Sigmoid colon (tissue), 7 donors: ENCODE measurements at regions of chr19 and their contacts with region 1.

Region 1: DNA sequence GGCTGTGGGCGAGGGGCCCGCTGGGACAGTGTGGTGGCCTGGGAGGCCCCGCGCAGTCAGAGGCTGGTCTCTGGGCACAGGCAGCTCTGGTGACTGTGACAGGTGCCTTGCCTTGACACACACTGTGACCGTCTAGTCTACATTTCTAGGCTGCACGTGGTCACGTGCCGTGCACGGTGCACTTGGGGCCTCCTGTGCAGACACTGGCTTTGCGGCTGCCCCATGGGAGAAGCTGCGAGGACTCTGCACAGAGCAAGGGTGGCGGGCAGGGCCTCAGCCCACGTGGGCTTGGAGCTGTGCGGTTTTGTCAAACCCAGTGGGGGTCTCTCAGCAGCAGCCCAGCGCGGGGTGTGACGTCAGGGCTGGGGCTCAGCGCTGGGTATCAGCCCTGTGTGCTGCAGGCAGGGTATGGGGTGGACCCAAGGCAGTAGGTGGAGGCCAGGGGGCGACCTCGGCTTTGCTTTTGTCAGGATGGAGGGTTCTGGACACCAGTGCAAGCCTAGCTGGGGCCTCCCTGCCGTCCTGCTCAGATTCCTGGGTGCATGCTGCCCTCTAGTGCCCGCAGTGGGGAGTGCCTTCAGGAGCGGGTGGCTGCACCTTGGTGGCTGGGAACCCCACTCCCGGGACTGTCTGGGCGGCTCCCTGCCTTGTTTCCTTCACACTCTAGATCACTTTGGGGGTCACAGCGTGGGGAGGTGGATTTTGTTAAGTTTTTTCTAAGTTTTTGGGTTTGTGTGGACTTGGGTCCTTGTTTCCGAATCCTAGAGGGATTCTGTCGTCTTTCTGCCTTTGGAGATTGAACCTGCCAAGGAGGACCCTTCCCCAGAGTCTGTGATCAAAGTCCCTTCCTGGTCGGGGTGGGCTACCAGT is 62.6 kb downstream of the KDM4B start:
- DNase-seq: peak; percentile 91
- H3K4me3 ChIP-seq: no peak overlapping the region
- H3K27ac ChIP-seq: peak overlapping the region in 1 of 4 donors; percentile 2
- H3K4me1 ChIP-seq: peaks cover 0 to 63% (median 51%) of the 10 kb centered on the region in 4 donors
- H3K27me3 ChIP-seq: no peaks in the 10 kb centered on the region
- CTCF ChIP-seq: peak; percentile 89 to 95 (median 93)
- EP300 ChIP-seq: no peak
- POLR2A ChIP-seq: no peak

Region 2: DNA sequence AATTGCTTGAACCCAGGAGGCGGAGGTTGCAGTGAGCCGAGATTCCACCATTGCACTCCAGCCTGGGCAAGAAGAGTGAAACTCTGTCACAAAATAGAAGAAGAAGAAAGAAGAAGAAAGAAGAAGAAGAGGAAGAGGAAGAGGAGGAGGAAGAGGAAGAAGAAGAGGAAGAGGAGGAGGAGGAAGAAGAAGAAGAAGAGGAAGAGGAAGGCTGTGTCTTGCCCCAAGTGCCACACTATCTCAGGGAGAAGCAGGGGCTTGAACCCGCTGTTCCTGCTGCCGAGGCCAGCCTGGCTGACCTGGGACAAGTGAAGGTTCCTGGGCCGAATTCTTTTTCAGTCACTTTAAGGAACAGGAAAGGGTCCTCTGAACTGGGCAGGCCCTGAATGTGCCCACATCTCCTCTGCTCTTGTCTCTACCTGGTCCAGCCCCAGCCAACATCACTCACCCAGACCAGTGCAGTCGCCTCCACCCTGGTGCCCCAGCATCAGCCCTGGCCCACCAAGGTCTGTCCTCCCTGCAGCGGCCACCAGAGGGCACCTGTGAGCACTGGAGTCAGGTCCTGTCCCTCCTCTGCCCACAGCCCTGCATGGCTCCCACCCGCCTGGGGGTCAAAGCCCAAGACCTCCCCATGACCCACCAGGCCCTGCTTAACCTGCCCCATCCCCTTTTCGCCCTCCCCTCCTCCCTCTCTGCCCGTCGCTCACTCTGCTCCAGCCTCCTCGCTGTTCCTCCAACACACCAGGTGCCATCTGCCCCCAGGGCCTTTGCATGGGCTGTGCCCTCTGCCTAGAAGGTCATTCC is 219.9 kb before region 1 on chr19:
- intact Hi-C with region 1: loop called (anchors 5 kb)
- DNase-seq: peak; percentile 87
- H3K4me3 ChIP-seq: no peak overlapping the region
- H3K27ac ChIP-seq: peak overlapping the region in 2 of 4 donors; percentile 18 to 88
- H3K4me1 ChIP-seq: peaks cover 0 to 39% (median 24%) of the 10 kb centered on the region in 4 donors
- H3K27me3 ChIP-seq: no peaks in the 10 kb centered on the region
- CTCF ChIP-seq: peak; percentile 73 to 88 (median 84)
- EP300 ChIP-seq: no peak
- POLR2A ChIP-seq: no peak

Region 3: GRCh38 chr19:4873930-4874329 is 157.5 kb before region 1 on chr19:
- intact Hi-C with region 1: loop called (anchors 2 kb)
- DNase-seq: no peak
- H3K4me3 ChIP-seq: no peak overlapping the region
- H3K27ac ChIP-seq: no peak overlapping the region
- H3K4me1 ChIP-seq: peaks cover 0 to 18% (median 15%) of the 10 kb centered on the region in 4 donors
- H3K27me3 ChIP-seq: no peaks in the 10 kb centered on the region
- CTCF ChIP-seq: no peak
- EP300 ChIP-seq: no peak
- POLR2A ChIP-seq: no peak

Region 4: DNA sequence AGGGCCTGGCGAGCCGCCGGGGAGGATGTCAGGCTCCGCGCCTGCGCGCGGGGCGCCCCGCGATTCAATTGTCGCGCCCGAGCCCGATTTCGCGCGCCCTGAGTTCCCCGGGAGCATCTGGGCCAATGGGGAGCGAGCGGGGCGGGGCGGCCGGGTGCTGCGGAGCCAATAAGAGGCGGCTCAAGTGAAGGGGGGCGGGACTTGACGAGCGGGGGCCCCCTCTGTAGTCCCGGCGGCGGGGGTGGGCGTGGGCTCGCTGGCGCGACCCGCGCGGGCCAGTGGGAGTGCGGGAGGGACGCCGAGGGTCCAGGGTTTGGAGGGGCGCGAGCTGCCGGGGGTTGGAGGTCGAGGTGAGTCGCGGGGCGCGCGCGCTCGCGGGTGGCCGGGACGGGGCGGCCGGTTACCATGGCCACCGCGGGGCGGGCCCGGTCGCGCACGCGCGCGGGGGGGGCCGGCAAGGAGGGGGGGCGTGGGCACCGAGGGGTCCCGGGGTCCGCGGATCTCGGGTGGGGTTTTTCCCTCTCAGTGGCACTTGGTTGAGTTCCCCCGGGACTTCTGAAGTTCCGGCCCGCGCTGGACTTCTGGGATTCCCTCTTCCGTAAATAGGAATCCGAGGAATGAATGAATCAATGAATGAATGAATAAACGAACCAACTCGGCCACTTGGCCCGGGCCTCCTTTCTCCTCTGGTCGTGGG is 121.4 kb before region 1 on chr19:
- intact Hi-C with region 1: loop called (anchors 1 kb)
- DNase-seq: peak; percentile 94
- H3K4me3 ChIP-seq: peak overlapping the region; percentile 49 to 72 (median 66)
- H3K27ac ChIP-seq: no peak overlapping the region
- H3K4me1 ChIP-seq: peaks cover 0 to 30% (median 28%) of the 10 kb centered on the region in 4 donors
- H3K27me3 ChIP-seq: peaks cover 6 to 21% (median 12%) of the 10 kb centered on the region in 3 donors
- CTCF ChIP-seq: no peak
- EP300 ChIP-seq: no peak
- POLR2A ChIP-seq: no peak

Region 5: DNA sequence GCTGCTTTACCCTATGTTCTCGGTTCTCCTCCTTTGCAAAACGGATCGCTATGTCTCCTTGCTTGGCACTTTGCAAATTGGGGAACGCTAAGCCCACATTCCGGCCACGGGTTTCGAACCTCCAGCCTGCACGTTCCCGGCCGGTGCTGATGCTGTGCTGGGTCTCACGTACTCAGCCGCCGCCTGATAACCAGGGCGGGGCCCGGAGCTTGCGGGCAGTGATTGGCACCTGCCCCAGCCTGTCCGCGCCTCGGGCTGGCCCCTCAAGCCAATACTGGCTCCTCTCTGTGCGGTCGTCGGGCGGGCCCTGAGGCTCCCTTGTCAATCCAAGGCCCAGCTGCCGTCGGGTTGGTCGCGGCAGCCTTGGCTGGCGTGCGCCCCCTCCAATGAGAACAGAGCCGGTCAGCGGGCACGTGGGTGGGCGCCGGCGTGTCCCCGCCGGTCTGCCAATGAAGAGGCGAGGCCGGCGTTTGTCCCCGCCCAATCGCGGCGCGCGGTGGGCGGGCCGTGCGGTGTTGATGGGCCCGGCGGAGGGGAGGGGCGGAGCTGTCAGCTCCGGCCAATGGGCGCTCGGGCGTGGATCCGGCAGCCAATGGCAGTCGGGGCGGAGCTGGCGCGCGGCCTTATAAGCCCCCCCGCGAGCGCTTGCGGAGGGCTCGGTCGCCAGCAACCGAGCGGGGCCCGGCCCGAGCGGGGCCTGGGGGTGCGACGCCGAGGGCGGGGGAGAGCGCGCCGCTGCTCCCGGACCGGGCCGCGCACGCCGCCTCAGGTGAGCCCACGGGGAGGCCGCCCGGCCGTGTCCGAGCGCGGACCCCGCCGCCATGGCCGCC is 62.8 kb before region 1 on chr19 and contains the start of gene KDM4B:
- intact Hi-C with region 1: loop called (anchors 2 kb)
- DNase-seq: peak; percentile 100
- H3K4me3 ChIP-seq: peak within 1 kb of the TSS; percentile 66 to 85 (median 78)
- H3K27ac ChIP-seq: peak within 1 kb of the TSS; percentile 71 to 80 (median 73)
- H3K4me1 ChIP-seq: peaks cover 0 to 45% (median 40%) of the 10 kb centered on the region in 4 donors
- H3K27me3 ChIP-seq: no peaks in the 10 kb centered on the region
- CTCF ChIP-seq: no peak
- EP300 ChIP-seq: no peak
- POLR2A ChIP-seq: no peak
- total RNA-seq, gene KDM4B: 20.7 to 46.5 (median 28.8) TPM

Region 6: DNA sequence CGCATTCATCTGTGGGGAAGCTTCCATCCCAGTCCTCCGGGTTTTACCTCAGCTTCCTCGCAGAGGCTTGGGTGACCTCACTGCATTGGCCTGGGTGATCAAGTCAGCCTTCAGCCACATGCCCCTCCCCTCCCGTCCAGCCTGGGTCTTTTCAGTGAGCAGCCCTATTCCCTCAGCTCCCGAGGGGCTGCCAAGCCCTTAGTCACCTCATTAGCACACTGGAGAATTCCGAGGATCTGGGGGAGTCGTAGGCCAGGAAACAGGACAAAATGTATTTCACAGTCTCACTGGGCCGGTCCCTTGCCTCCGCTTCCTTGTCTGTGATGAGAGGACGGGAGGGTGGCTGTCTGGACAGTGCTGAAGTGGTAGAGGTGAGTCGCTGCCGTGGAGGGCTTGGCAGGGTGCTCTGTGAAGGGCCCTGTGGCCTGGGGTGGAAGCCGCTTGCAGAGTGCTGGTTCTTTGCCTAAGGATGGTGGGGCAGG is 42.7 kb before region 1 on chr19:
- intact Hi-C with region 1: loop called (anchors 5 kb)
- DNase-seq: peak; percentile 90
- H3K4me3 ChIP-seq: no peak overlapping the region
- H3K27ac ChIP-seq: peak overlapping the region; percentile 43 to 68 (median 59)
- H3K4me1 ChIP-seq: peaks cover 0 to 54% (median 43%) of the 10 kb centered on the region in 4 donors
- H3K27me3 ChIP-seq: no peaks in the 10 kb centered on the region
- CTCF ChIP-seq: no peak
- EP300 ChIP-seq: no peak
- POLR2A ChIP-seq: no peak

Region 7: DNA sequence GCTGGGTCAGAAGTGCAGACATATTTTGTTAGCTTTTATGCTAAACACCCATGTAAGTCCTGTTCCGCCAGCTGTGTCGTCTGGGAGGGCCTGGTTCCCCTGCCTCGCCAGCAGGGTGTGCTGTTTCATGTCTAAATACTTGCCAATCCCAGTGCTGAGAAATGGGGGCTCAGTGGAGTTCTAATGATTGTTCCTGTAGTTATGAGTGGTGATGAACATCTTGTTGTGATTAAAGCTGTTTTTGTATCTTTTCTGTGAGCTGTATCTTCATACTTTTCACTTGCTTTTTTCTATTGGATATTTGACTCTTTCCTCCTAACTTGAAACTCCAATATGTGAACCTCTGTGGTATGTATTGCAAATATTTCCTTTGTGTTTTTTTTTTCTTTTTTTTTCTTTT is 29.9 kb before region 1 on chr19:
- intact Hi-C with region 1: loop called (anchors 2 kb)
- DNase-seq: no peak
- H3K4me3 ChIP-seq: no peak overlapping the region
- H3K27ac ChIP-seq: no peak overlapping the region
- H3K4me1 ChIP-seq: peaks cover 0 to 8% (median 4%) of the 10 kb centered on the region in 4 donors
- H3K27me3 ChIP-seq: no peaks in the 10 kb centered on the region
- CTCF ChIP-seq: peak in 3 of 4 experiments; percentile 41 to 64 (median 55)
- EP300 ChIP-seq: no peak
- POLR2A ChIP-seq: no peak